ENCODE measurements at regions of chr19 and their contacts with region 1.

Region 1: GRCh38 chr19:46487802-46488445 is 7.7 kb downstream of the PNMA8B start:
- DNase-seq: peak in 1 of 2 donors; percentile 90
- H3K4me3 ChIP-seq: peak overlapping the region; percentile 56 to 67
- H3K27ac ChIP-seq: peak overlapping the region in 1 of 2 donors; percentile 51
- H3K4me1 ChIP-seq: peaks cover 11 to 19% of the 10 kb centered on the region in 2 donors
- H3K27me3 ChIP-seq: no peaks in the 10 kb centered on the region
- CTCF ChIP-seq: peak; percentile 93 to 99 (median 99)

Region 2: DNA sequence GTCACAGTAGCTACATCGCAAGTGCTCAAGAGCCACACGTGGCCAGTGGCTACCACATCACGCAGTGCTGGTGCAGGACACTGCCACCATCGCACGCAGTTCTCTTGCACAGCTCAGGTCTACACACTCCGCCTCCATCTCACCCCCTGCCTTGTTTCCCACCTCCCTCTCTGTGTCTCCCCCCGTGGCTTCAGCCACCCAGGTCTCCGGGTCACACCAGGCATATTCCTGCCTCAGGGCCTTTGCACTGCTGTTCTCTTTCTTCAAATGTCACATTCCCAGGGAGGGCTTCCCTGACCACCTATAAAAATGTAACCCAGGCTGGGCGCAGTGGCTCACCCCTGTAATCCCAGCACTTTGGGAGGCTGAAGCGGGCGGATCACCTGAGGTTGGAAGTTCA is 85.2 kb before region 1 on chr19:
- intact Hi-C with region 1: loop called (anchors 1 kb)
- DNase-seq: no peak
- H3K4me3 ChIP-seq: peak overlapping the region in 1 of 2 donors; percentile 62
- H3K27ac ChIP-seq: peak overlapping the region in 1 of 2 donors; percentile 63
- H3K4me1 ChIP-seq: peaks cover 0 to 18% of the 10 kb centered on the region in 2 donors
- H3K27me3 ChIP-seq: no peaks in the 10 kb centered on the region
- CTCF ChIP-seq: no peak

Region 3: GRCh38 chr19:46466536-46467196 is 21.3 kb before region 1 on chr19:
- intact Hi-C with region 1: no loop called
- DNase-seq: peak in 1 of 2 donors; percentile 81
- H3K4me3 ChIP-seq: peak overlapping the region in 1 of 2 donors; percentile 40
- H3K27ac ChIP-seq: peak overlapping the region; percentile 61 to 66
- H3K4me1 ChIP-seq: peaks cover 6 to 16% of the 10 kb centered on the region in 2 donors
- H3K27me3 ChIP-seq: no peaks in the 10 kb centered on the region
- CTCF ChIP-seq: no peak

Region 4: DNA sequence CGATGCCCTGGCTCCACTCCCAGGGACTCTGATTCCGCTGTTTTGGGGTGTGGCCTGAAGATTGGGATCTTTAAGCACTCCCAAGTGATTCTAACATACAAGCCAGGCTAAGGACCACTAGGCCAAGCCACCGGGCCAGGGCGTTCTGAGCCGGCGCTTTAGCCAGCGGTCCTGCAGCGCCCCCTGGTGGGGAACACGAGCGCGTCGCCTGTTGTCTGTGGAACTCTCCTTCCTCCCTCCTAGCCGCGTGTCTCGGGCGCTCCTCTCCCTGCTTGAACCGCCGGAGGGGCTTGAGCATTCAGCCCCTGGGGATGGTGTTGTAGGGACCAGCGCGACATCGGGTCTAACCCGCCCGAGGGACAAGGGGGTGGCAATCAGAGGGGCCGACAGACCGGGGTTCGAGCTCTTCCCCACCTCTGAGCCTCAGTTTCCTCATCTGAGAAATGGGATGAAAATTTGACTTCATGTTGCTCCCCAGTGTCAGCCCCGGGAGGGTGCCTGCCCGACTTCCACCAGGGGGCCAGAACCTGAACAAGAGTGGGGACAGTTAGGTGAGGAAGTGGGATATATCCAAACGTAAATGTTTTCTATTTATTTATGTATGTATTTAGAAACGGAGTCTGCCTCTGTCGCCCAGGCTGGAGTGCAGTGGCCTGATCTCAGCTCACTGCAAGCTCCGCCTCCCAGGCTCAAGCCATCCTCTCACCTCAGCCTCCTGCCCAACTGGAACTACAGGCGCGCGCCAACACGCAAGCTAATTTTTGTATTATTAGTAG is 25.7 kb after region 1 on chr19:
- intact Hi-C with region 1: loop called (anchors 1 kb)
- DNase-seq: peak in 1 of 2 donors; percentile 85
- H3K4me3 ChIP-seq: peak overlapping the region in 1 of 2 donors; percentile 13
- H3K27ac ChIP-seq: peak overlapping the region in 1 of 2 donors; percentile 5
- H3K4me1 ChIP-seq: peaks cover 3 to 14% of the 10 kb centered on the region in 2 donors
- H3K27me3 ChIP-seq: no peaks in the 10 kb centered on the region
- CTCF ChIP-seq: peak; percentile 97 to 99 (median 98)

Region 5: GRCh38 chr19:46850228-46851203 is 362.6 kb after region 1 on chr19 and contains the start of gene AP2S1:
- intact Hi-C with region 1: no loop called
- DNase-seq: peak; percentile 94 to 99
- H3K4me3 ChIP-seq: peak within 1 kb of the TSS; percentile 81 to 93
- H3K27ac ChIP-seq: peak within 1 kb of the TSS; percentile 85 to 89
- H3K4me1 ChIP-seq: peaks cover 5 to 16% of the 10 kb centered on the region in 2 donors
- H3K27me3 ChIP-seq: no peaks in the 10 kb centered on the region
- CTCF ChIP-seq: no peak
- total RNA-seq, gene AP2S1: 96.6 TPM